GM12878 (cell line): ENCODE measurements at regions of chr16 and their contacts with region 1.

Region 1: GRCh38 chr16:85916141-85916890 is 17.4 kb downstream of the IRF8 start:
- DNase-seq: no peak
- ATAC-seq: peak; percentile 7; the same call in 2 of the 3 replicates
- H3K4me3 ChIP-seq: no peak overlapping the region
- H3K27ac ChIP-seq: no peak overlapping the region
- H3K4me1 ChIP-seq: peaks cover 56% of the 10 kb centered on the region
- H3K27me3 ChIP-seq: no peaks in the 10 kb centered on the region
- CTCF ChIP-seq: no peak
- EP300 ChIP-seq: no peak
- POLR2A ChIP-seq: peak; percentile 75; the same call in 1 of the 2 replicates
- RAD21 ChIP-seq: no peak

Region 2: DNA sequence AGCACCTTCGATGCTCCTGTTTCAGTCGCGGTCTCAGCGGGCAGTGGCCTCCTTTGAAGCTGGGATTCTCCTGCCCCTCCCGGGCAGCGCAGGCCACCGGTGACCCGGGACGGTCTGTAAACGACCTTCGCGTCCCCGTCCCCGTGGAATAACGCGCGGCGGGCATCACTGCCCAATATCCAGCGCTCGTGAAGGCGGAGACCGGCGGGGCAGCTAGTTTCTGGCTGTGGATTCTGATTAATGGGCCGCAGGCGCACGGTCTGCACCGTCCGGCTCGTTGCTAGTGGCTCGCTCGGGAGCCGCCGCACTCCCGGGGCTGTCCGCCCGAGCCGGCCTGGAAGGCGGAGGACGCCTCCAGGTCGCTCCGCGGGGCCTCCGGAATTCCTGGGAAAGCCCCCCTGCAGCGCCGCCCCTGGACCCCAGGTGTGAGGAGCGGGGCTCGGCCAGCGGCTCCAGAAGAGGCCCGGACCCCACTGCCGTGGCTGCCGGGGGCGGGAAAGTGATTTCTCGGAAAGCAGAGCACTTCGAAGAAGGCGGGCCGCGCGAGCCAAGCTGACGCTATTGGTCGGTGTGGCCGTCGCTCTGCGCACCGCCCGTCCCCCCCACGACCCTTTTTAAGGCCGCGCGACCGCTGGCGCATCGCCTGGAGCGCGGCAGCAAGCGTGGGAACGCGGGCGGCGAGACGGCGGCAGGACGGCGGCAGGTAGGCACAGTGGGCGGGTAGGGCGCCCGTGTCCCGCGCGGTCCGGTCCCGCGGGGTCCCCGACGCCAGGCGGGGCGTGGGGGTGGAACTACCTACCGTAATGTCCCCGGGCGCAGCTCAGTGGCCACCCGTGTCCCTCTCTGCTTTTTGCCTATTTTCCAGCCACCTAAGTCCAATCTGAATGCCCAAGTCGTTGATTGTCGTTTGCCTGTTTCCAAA is 17.5 kb before region 1 on chr16 and contains the start of gene IRF8:
- CTCF ChIA-PET with region 1: interaction called, 9 read pairs
- POLR2A ChIA-PET with region 1: interaction called, 5 read pairs
- RAD21 ChIA-PET with region 1: interaction called, 19 read pairs
- SMC1A ChIA-PET with region 1: interaction called, 44 read pairs
- in situ Hi-C with region 1: no loop called
- intact Hi-C with region 1: no loop called
- DNase-seq: peak; percentile 59
- ATAC-seq: peak; percentile 77
- H3K4me3 ChIP-seq: peak within 1 kb of the TSS; percentile 99
- H3K27ac ChIP-seq: peak within 1 kb of the TSS; percentile 89
- H3K4me1 ChIP-seq: peaks cover 7% of the 10 kb centered on the region
- H3K27me3 ChIP-seq: no peaks in the 10 kb centered on the region
- CTCF ChIP-seq: no peak
- EP300 ChIP-seq: no peak
- POLR2A ChIP-seq: peak; percentile 100
- RAD21 ChIP-seq: no peak
- polyA plus RNA-seq, gene IRF8: 17.1 to 34.5 TPM

Region 3: DNA sequence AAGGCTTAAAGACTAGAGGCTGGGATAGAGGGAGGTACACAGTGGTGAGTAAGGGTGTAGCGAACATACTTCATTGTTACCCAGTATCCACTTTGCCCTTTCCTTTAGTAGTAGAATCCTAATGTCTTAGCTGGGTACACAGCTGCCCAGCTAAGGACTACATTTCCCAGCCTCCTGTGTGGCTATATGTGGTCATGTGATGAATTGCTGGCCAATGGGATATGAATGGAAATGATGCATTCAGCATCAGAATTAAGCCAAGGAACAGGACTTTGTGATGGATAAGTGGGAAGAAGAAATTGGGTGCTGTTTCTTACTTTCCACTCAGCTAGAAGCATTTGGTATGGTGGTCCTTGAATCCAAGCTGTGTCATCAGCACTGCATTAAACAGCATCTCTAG is 718.0 kb after region 1 on chr16:
- CTCF ChIA-PET with region 1: no interaction called
- POLR2A ChIA-PET with region 1: no interaction called
- RAD21 ChIA-PET with region 1: no interaction called
- SMC1A ChIA-PET with region 1: no interaction called
- in situ Hi-C with region 1: no loop called
- intact Hi-C with region 1: no loop called
- DNase-seq: no peak
- ATAC-seq: no peak
- H3K4me3 ChIP-seq: no peak overlapping the region
- H3K27ac ChIP-seq: no peak overlapping the region
- H3K4me1 ChIP-seq: no peaks in the 10 kb centered on the region
- H3K27me3 ChIP-seq: peaks cover 0 to 3% of the 10 kb centered on the region in 2 experiments; a peak in 3 of 4 replicates
- CTCF ChIP-seq: no peak
- EP300 ChIP-seq: no peak
- POLR2A ChIP-seq: no peak
- RAD21 ChIP-seq: no peak